ENCODE measurements at regions of chr16 and their contacts with region 1.

Region 1: DNA sequence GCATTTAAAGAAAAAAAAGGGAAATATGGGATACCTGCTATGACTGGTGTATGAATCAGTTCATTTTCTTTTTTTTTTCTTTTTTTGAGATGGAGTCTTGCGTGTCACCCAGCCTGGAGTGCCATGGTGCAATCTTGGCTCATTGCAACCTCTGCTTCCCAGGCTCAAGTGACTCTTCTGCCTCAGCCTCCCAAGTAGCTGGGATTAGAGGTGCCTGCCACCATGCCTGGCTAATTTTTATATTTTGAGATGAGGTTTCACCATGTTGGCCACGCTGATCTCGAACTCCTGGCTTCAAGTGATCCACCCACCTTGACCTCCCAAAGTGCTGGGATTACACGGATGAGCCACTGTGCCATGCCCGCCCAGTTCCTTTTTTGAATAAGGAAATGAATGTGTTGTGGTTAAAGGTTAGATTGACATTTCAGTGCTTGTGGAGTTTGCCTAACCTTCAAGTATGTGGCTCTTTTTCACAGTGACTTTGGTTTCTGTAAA is 7.7 kb downstream of the HAPSTR1 start:
- DNase-seq: peak; percentile 65
- H3K4me3 Mint-ChIP-seq: peak overlapping the region; percentile 70
- H3K27ac Mint-ChIP-seq: peak overlapping the region; percentile 81
- H3K4me1 Mint-ChIP-seq: peaks cover 75% of the 10 kb centered on the region
- H3K27me3 Mint-ChIP-seq: no peaks in the 10 kb centered on the region

Region 2: DNA sequence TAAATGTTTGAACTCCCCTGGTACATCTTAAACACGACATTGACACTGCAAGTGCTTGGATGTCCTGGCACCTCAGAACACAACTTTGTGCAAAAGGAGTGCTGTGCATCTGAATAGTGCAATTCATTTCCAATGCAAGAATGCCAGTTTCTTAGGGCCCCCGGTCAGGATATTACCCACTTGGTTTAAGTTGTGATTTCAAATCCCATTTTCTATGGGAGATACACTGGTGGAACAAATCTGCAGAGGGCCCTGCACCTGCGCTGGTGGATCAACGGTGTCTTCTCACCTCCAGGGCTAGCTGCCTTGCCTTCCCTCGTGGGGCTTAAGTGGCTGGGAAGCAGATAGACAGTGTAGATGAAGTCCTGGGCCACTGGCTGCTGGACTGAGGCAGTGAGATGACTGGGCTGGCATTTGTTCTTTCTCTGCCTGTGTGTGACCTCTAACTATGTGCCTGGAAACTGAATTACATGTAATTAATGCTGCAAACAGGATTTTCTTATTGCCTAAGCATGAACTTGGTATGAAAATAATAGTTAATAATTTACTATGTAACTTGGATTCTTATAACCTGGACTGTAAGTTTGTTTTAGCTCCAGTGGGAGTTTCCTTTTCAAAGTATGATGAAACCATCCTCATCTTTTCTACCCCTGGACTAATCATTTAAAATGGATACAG is 13.1 kb after region 1 on chr16:
- intact Hi-C with region 1: loop called (anchors 2 kb)
- DNase-seq: no peak
- H3K4me3 Mint-ChIP-seq: no peak overlapping the region
- H3K27ac Mint-ChIP-seq: no peak overlapping the region
- H3K4me1 Mint-ChIP-seq: peaks cover 59% of the 10 kb centered on the region
- H3K27me3 Mint-ChIP-seq: no peaks in the 10 kb centered on the region